ENCODE measurements at regions of chr5 and their contacts with region 1.

Region 1: GRCh38 chr5:42908509-42909488 is 97.1 kb upstream of the SELENOP start:
- DNase-seq: peak; percentile 68
- H3K4me3 ChIP-seq: peak overlapping the region; percentile 58
- H3K27ac ChIP-seq: no peak overlapping the region
- H3K27me3 ChIP-seq: peaks cover 23% of the 10 kb centered on the region
- CTCF ChIP-seq: peak; percentile 88

Region 2: DNA sequence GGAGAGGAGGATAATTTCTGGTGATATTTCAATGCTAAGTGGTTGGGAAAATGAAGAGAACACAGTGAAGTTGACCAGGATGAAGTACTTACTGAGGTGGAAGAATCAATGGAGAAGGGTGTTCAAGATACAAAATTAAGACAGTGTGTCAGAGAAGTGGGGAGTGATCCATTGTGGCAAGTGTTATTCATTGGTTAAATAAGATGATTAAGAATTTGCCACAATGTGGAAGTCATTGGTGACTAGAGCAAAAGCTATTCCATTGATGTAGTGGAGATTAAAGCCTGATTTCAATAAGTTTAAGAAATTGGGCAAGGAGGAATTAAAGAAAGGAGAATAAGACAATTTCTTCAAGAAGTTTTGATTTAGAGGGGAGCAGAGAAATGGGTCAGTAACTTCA is 366.7 kb before region 1 on chr5:
- CTCF ChIA-PET with region 1: no interaction called
- POLR2A ChIA-PET with region 1: no interaction called
- DNase-seq: no peak
- H3K4me3 ChIP-seq: no peak overlapping the region
- H3K27ac ChIP-seq: no peak overlapping the region
- H3K27me3 ChIP-seq: no peaks in the 10 kb centered on the region
- CTCF ChIP-seq: no peak

Region 3: GRCh38 chr5:42889311-42889933 is 19.4 kb before region 1 on chr5:
- CTCF ChIA-PET with region 1: interaction called, 15 read pairs
- POLR2A ChIA-PET with region 1: no interaction called
- DNase-seq: peak; percentile 18
- H3K4me3 ChIP-seq: no peak overlapping the region
- H3K27ac ChIP-seq: no peak overlapping the region
- H3K27me3 ChIP-seq: peaks cover 8% of the 10 kb centered on the region
- CTCF ChIP-seq: peak; percentile 95

Region 4: DNA sequence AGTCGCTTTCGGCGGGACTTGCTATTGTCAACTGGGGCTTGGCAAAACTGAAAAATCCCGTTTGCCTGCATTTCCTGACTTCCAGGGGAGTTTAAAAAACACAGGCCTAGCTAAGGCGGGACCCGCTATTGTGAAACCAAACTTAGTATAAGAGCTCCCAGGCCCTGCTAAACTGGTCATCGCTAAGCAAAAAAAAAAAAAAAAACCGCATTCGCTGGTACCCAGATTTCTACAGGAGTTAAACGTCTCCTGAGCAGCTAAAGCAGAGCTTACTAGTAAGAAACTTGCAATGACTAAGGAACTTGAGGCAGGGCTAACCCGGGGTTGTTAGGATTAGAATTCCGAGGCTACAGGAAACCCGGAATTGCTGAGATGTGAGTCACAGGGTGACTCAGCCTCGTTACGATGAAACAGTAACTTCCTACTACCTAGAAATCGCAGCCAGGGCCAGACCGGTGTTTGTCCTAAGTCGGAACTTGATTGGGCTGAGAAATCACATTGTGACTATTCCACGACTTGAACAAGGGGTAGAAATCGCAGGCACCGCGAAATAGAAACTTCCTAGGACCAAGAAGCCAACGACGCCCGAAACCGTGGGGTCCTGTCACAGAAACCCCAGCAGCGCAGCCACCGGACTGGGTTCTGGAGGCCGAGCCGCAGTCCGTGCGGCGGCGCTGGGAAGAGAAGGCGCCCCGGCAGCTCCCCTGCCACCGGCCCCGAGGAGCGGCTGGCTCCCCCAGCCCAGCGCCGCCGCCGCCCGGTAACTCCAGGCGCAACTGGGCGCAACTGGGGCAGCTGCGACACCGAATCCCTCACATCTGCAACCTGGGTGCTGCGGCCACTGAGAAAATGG is 41.9 kb after region 1 on chr5:
- CTCF ChIA-PET with region 1: interaction called, 13 read pairs
- POLR2A ChIA-PET with region 1: interaction called, 15 read pairs
- DNase-seq: peak; percentile 99
- H3K4me3 ChIP-seq: peak overlapping the region; percentile 64
- H3K27ac ChIP-seq: peak overlapping the region; percentile 99
- H3K27me3 ChIP-seq: no peaks in the 10 kb centered on the region
- CTCF ChIP-seq: no peak

Region 5: DNA sequence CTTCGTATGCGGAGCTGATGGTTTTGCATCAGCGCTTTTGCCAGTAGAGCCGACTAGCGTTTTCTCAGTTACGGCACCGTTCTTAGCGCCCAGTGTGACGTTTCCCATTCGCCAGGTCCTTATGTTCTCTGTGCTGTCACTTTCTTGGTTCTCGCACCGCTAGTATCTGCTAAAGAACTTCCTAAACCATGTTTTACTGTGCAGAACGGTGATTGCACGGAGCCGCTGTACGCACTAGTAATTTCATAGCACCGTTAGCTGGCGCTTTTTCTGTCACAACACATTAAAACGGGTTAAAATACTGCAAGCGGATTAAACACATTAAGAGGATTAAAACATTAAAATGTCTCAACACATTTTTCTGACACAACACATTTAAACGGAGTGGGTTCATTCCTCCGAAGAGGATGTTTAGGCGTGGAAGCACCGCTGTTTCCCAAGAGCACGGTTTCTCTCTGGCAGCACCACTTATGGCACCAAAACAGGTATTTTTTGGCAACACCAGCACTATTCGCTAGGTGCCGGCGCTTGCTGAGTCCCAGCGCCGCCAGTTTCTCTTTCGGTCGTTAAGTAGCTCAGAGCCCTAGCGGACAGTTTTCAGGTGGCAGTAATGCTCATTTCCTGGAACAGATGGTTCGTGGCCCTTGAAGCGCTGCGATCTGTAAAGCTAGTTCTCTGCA is 111.0 kb after region 1 on chr5:
- CTCF ChIA-PET with region 1: interaction called, 18 read pairs
- POLR2A ChIA-PET with region 1: no interaction called
- DNase-seq: no peak
- H3K4me3 ChIP-seq: peak overlapping the region; percentile 68
- H3K27ac ChIP-seq: peak overlapping the region; percentile 90
- H3K27me3 ChIP-seq: no peaks in the 10 kb centered on the region
- CTCF ChIP-seq: peak; percentile 61

Region 6: DNA sequence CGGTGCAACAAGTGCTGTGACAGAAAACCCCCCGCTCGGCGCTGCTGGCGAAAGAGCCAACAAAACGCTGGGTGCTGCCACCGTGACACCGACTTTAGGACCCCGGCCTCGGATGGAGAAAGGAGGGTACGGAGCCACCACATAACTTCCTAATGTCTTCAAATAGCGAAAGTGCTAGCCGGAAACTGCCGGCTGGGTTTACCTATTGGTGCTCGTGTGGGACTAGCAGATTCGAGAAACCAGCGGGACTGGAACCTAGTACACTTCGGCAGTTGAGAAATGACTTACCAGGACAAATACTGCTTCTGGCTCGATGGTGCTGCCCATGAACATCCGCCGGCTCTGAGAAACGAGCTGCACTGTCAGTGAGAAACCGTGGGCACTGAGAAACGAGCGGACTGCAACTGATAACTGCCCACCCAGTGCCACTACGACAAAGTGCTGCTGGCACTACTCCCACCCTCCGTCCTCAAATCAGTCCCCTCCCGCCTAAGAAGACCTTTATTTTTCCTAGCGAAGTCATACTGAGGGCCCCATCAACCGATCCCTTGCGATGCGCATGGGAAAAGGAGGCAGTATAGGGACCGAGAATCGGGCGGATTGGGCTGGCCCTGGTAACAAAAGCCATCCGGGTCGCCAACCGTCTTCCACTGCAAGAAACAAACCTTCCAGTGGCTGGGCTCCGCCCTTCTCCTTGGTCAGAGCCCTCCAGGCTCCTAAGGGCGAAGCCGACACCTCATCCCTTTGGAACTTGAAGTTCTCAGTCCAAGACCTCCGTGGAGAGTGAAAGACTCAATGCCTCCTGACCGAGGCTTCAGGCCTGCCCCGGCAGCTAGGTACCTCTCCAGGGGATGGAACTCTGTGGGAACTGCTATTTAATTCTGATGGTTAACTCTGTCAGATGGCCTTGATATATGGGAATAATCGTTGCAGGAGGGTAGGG is 158.3 kb after region 1 on chr5:
- CTCF ChIA-PET with region 1: interaction called, 19 read pairs
- POLR2A ChIA-PET with region 1: interaction called, 4 read pairs
- DNase-seq: peak; percentile 79
- H3K4me3 ChIP-seq: peak overlapping the region; percentile 92
- H3K27ac ChIP-seq: peak overlapping the region; percentile 96
- H3K27me3 ChIP-seq: no peaks in the 10 kb centered on the region
- CTCF ChIP-seq: no peak

Region 7: GRCh38 chr5:43281840-43282658 is 373.2 kb after region 1 on chr5:
- CTCF ChIA-PET with region 1: no interaction called
- POLR2A ChIA-PET with region 1: no interaction called
- DNase-seq: no peak
- H3K4me3 ChIP-seq: no peak overlapping the region
- H3K27ac ChIP-seq: no peak overlapping the region
- H3K27me3 ChIP-seq: no peaks in the 10 kb centered on the region
- CTCF ChIP-seq: no peak

Region 8: DNA sequence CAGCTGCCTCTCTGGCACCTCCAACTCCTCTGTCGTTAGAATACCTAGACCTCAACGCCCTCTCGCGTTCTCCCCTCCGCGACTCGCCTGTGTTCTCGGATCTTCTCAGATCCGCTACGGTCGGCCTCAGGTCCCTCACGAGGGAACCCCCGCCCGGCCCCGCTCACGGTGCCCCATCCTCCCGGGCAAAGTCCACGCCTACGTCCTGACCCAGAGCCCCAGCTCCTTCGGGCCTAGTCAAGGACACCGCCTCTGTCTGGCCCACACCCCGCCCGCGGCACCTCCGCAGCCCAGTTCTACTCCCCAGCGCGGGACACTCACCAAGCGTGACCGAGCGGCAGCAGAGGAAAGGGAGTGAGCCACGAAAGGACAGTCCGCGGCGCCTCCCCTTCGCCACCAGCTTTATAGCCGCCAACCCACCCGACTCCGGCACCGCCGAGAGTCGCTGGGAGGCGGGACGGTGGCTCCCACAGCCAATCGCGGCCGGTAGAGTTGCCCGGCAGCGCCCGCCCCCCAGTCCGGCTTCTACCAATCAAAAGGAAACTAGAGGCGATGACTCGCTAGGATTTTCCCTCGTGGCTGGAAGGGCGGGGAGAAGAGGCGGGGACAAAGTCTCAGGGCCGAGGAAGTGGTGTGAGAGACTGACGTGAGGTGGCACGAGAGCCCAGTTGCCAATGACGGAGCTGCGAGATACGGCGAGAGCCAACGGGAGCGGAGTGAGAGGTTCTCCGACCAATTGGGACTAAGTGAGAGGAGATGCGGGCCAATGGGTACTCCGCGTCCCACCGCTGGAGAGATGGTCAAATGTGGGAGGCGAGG is 404.4 kb after region 1 on chr5 and contains the start of gene HMGCS1:
- CTCF ChIA-PET with region 1: interaction called, 10 read pairs
- POLR2A ChIA-PET with region 1: no interaction called
- DNase-seq: peak; percentile 99
- H3K4me3 ChIP-seq: peak within 1 kb of the TSS; percentile 98
- H3K27ac ChIP-seq: peak within 1 kb of the TSS; percentile 91
- H3K27me3 ChIP-seq: peaks cover 3% of the 10 kb centered on the region
- CTCF ChIP-seq: peak; percentile 8; the same call in 1 of the 2 replicates
- polyA plus RNA-seq, gene HMGCS1: 26.5 and 31.1 TPM in 2 replicates

Measured in AG04450 (cell line).